CD4-positive, alpha-beta memory T cell (primary cell): ENCODE measurements at regions of chr16 and their contacts with region 1.

Region 1: DNA sequence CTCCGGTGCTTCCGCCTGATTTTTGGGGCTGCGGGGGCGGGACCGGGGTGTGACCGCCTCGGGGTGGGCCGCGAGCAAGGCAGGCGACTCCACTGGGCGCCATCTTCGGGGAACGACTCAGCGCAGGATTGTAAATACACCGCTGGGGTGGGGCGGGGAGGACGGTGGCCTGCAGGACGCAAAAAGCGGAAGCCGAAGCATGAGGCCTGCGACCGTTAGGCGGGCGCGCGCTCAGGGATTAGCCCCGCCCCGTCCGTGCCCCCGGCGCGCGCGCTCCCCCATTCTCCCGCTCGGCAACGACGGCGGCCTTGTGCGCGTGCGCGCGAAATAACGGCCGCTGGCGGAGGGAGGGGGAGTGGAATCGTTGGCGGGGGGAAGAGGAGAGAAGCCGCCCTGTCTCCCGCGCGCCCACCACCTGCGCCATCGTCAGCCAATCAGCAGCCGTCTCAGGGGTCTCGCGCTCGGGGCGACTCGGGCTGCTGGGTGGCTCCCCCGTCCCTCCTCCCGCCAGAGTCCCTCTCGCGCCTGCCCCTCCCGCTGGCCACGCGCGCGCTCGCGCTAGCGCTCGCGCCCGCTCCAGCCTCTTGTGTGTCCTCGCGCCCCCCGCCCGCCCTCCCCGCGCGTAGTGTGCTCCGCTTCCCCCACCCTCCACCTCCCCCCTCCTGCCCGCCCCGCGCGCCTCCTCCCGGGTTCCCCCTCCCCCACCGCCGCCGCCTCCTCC is 791 bp upstream of the MAZ start:
- DNase-seq: peak; percentile 97 to 99 (median 98)
- H3K4me3 ChIP-seq: peak overlapping the region; percentile 43 to 95
- H3K4me3 Mint-ChIP-seq: peak overlapping the region; percentile 99 to 100 (median 100)
- H3K27ac ChIP-seq: peak overlapping the region; percentile 86
- H3K27ac Mint-ChIP-seq: peak overlapping the region; percentile 98 to 100 (median 99)
- H3K4me1 ChIP-seq: peaks cover 46% of the 10 kb centered on the region
- H3K4me1 Mint-ChIP-seq: peaks cover 26 to 53% (median 37%) of the 10 kb centered on the region in 4 donors
- H3K27me3 ChIP-seq: no peaks in the 10 kb centered on the region
- H3K27me3 Mint-ChIP-seq: no peaks in the 10 kb centered on the region

Region 2: DNA sequence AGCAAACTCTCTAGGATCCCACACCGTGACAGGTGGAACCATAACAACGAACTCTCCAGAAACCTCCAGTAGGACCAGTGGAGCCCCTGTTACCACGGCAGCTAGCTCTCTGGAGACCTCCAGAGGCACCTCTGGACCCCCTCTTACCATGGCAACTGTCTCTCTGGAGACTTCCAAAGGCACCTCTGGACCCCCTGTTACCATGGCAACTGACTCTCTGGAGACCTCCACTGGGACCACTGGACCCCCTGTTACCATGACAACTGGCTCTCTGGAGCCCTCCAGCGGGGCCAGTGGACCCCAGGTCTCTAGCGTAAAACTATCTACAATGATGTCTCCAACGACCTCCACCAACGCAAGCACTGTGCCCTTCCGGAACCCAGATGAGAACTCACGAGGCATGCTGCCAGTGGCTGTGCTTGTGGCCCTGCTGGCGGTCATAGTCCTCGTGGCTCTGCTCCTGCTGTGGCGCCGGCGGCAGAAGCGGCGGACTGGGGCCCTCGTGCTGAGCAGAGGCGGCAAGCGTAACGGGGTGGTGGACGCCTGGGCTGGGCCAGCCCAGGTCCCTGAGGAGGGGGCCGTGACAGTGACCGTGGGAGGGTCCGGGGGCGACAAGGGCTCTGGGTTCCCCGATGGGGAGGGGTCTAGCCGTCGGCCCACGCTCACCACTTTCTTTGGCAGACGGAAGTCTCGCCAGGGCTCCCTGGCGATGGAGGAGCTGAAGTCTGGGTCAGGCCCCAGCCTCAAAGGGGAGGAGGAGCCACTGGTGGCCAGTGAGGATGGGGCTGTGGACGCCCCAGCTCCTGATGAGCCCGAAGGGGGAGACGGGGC is 141.2 kb before region 1 on chr16:
- CTCF ChIA-PET with region 1: no interaction called
- POLR2A ChIA-PET with region 1: interaction called, 11 read pairs
- intact Hi-C with region 1: no loop called
- DNase-seq: peak; percentile 46 to 69 (median 51)
- H3K4me3 ChIP-seq: peak overlapping the region; percentile 78 to 95
- H3K4me3 Mint-ChIP-seq: peak overlapping the region; percentile 97 to 99 (median 99)
- H3K27ac ChIP-seq: peak overlapping the region; percentile 82
- H3K27ac Mint-ChIP-seq: peak overlapping the region; percentile 94 to 100 (median 97)
- H3K4me1 ChIP-seq: peaks cover 69% of the 10 kb centered on the region
- H3K4me1 Mint-ChIP-seq: peaks cover 35 to 91% (median 56%) of the 10 kb centered on the region in 4 donors
- H3K27me3 ChIP-seq: no peaks in the 10 kb centered on the region
- H3K27me3 Mint-ChIP-seq: peaks cover 0 to 3% of the 10 kb centered on the region in 2 donors

Region 3: GRCh38 chr16:29745853-29746345 is 59.6 kb before region 1 on chr16 and contains the start of gene C16orf54:
- CTCF ChIA-PET with region 1: no interaction called
- POLR2A ChIA-PET with region 1: interaction called, 164 read pairs
- intact Hi-C with region 1: loop called (anchors 1 kb)
- DNase-seq: peak; percentile 98 to 99 (median 98)
- H3K4me3 ChIP-seq: peak within 1 kb of the TSS; percentile 67 to 93
- H3K4me3 Mint-ChIP-seq: peak within 1 kb of the TSS; percentile 96 to 100 (median 99)
- H3K27ac ChIP-seq: peak within 1 kb of the TSS; percentile 94
- H3K27ac Mint-ChIP-seq: peak within 1 kb of the TSS; percentile 98 to 100 (median 100)
- H3K4me1 ChIP-seq: peaks cover 78% of the 10 kb centered on the region
- H3K4me1 Mint-ChIP-seq: peaks cover 39 to 79% (median 54%) of the 10 kb centered on the region in 4 donors
- H3K27me3 ChIP-seq: no peaks in the 10 kb centered on the region
- H3K27me3 Mint-ChIP-seq: peaks cover 0 to 2% of the 10 kb centered on the region in 2 donors
- total RNA-seq, gene C16orf54: 139 to 143 TPM

Region 4: DNA sequence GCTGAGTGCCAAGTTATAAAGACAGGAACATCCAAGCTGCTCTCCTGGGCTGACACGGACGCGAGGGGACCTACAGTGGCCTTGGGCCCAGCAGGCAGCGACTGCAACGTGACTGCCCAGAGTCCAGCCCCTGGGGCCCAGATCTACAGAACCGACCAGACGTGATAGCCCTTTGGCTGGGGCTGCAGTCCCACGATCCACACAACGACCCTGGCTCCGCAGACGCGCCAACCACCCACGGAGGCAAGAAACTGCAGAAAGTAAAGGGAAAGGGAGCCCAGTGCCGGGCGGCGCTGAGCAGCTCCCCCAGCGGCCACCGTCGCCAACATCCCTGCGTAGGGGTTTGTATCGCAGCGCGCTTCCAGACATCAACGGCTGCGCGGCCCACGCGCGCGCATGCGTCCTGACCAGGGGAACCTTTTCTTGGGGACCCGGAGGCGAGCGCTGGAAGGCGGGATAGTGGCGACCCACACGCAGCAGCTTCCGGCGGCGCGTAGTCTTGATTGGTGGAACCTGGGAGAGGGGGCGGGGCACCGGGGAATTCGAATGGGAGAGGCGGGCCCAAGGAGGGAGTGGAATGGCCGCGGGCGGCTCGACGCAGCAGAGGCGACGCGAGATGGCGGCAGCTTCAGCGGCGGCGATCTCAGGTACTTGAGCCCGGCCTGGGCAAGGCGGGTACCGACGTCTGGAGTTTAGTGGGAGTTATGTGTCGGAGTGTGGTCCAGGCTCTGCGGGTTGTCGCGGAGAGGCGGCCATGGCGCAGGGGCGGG is 15.2 kb before region 1 on chr16 and contains the start of gene KIF22:
- CTCF ChIA-PET with region 1: interaction called, 53 read pairs
- POLR2A ChIA-PET with region 1: interaction called, 522 read pairs
- intact Hi-C with region 1: loop called (anchors 1 kb)
- DNase-seq: peak; percentile 99 to 100 (median 100)
- H3K4me3 ChIP-seq: peak within 1 kb of the TSS; percentile 90 to 98
- H3K4me3 Mint-ChIP-seq: peak within 1 kb of the TSS; percentile 97 to 100 (median 99)
- H3K27ac ChIP-seq: peak within 1 kb of the TSS; percentile 80
- H3K27ac Mint-ChIP-seq: peak within 1 kb of the TSS; percentile 96 to 99 (median 98)
- H3K4me1 ChIP-seq: peaks cover 43% of the 10 kb centered on the region
- H3K4me1 Mint-ChIP-seq: peaks cover 27 to 58% (median 43%) of the 10 kb centered on the region in 4 donors
- H3K27me3 ChIP-seq: no peaks in the 10 kb centered on the region
- H3K27me3 Mint-ChIP-seq: no peaks in the 10 kb centered on the region
- total RNA-seq, gene KIF22: 89.4 to 98.6 TPM

Region 5: GRCh38 chr16:29862884-29863668 is 57.5 kb after region 1 on chr16 and contains the start of gene CDIPT:
- CTCF ChIA-PET with region 1: interaction called, 4 read pairs
- POLR2A ChIA-PET with region 1: interaction called, 12 read pairs
- intact Hi-C with region 1: no loop called
- DNase-seq: peak; percentile 95 to 96 (median 95)
- H3K4me3 ChIP-seq: peak within 1 kb of the TSS; percentile 69 to 83
- H3K4me3 Mint-ChIP-seq: peak within 1 kb of the TSS; percentile 84 to 99 (median 96)
- H3K27ac ChIP-seq: peak within 1 kb of the TSS; percentile 89
- H3K27ac Mint-ChIP-seq: peak within 1 kb of the TSS; percentile 87 to 100 (median 98)
- H3K4me1 ChIP-seq: peaks cover 22% of the 10 kb centered on the region
- H3K4me1 Mint-ChIP-seq: peaks cover 4 to 34% (median 19%) of the 10 kb centered on the region in 4 donors
- H3K27me3 ChIP-seq: no peaks in the 10 kb centered on the region
- H3K27me3 Mint-ChIP-seq: no peaks in the 10 kb centered on the region
- total RNA-seq, gene CDIPT: 76.2 to 79.8 TPM

Region 6: DNA sequence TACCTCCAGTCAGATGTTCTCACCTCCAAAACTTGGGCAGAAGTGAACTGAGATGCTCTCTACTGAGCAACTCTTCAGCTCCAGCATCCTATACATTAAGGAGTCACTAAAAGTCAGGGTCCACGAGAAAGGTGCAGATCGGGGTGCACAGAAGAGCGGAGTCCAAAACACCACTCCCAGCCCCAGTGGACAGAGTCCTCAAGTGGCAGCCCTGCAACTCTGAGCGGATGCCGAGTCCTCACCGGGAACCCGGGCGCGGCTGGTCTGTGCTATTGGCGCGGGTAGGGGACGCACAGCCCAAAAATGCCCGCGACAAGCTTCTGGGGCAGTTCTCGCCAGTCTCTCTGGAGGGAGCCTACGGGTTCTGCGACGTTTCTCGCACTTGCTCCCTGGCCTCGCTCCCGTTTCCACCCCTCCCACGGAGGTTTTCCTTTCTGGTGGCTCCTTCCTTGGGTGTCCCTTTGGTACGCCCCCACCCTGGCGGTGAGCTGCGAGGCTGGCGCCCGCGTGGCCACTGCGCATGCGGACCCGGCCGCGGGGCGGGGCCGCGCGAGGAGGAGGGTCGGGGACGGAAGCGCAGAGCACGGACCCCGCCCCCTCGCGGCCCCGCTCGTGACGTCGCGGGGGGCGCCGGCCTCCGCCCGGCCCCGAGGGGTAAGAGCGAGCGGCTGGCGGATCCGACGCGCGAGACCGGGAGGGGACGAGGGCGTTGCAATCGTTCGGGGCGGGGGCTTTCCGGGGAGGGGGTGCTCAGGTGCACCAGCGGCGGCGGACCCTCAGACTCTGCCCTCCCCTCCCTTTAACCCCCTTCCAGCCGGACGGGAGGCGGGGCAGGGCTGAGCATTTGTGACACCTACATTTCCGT is 156.2 kb after region 1 on chr16 and contains the start of gene TMEM219:
- CTCF ChIA-PET with region 1: no interaction called
- POLR2A ChIA-PET with region 1: interaction called, 15 read pairs
- intact Hi-C with region 1: loop called (anchors 5 kb)
- DNase-seq: peak; percentile 92 to 98 (median 95)
- H3K4me3 ChIP-seq: peak within 1 kb of the TSS; percentile 75 to 89
- H3K4me3 Mint-ChIP-seq: peak within 1 kb of the TSS; percentile 88 to 95 (median 92)
- H3K27ac ChIP-seq: peak within 1 kb of the TSS; percentile 87
- H3K27ac Mint-ChIP-seq: peak within 1 kb of the TSS; percentile 92 to 99 (median 96)
- H3K4me1 ChIP-seq: peaks cover 19% of the 10 kb centered on the region
- H3K4me1 Mint-ChIP-seq: peaks cover 11 to 30% (median 20%) of the 10 kb centered on the region in 4 donors
- H3K27me3 ChIP-seq: no peaks in the 10 kb centered on the region
- H3K27me3 Mint-ChIP-seq: no peaks in the 10 kb centered on the region
- total RNA-seq, gene TMEM219: 80.8 to 103 TPM

Region 7: GRCh38 chr16:30065143-30065850 is 259.8 kb after region 1 on chr16 and contains the start of gene ALDOA:
- CTCF ChIA-PET with region 1: no interaction called
- POLR2A ChIA-PET with region 1: interaction called, 11 read pairs
- intact Hi-C with region 1: no loop called
- DNase-seq: peak; percentile 94 to 96 (median 94)
- H3K4me3 ChIP-seq: peak within 1 kb of the TSS; percentile 77 to 93
- H3K4me3 Mint-ChIP-seq: peak within 1 kb of the TSS; percentile 98 to 100 (median 99)
- H3K27ac ChIP-seq: peak within 1 kb of the TSS; percentile 94
- H3K27ac Mint-ChIP-seq: peak within 1 kb of the TSS; percentile 95 to 100 (median 97)
- H3K4me1 ChIP-seq: peaks cover 47% of the 10 kb centered on the region
- H3K4me1 Mint-ChIP-seq: peaks cover 17 to 58% (median 33%) of the 10 kb centered on the region in 4 donors
- H3K27me3 ChIP-seq: no peaks in the 10 kb centered on the region
- H3K27me3 Mint-ChIP-seq: no peaks in the 10 kb centered on the region
- total RNA-seq, gene ALDOA: 558 to 563 TPM